ENCODE measurements at regions of chr1 and their contacts with region 1.

Region 1: DNA sequence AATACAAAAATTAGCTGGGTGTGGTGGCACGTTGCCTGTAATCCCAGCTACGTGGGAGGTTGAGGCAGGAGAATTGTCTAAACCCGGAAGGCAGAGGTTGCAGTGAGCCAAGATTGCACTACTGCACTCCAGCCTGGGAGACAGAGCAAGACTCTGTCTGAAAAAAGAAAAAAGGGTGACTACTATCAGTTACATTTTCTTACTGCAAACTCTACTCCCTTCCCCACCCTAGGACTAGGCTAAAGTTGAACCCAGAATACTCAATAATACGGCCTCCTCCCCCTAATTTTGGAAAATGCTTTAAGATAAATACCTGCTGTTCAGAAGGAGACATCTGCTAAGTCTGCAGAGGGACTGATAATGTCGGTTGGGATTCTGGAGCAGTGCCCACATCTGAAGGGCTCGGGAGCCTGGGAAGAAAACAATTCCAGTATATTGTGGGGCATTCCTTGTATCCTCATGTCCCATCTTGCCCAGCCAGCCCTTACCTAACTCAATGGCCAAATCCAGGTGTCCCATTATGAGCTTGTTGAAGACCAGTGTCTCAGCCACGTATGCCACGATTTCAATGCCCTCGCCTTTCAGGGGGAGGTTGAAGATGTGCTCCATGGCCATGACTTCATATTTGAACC is 89.7 kb downstream of the ADCY10 start:
- DNase-seq: no peak
- ATAC-seq: no peak
- H3K4me3 ChIP-seq: no peak overlapping the region
- H3K27ac ChIP-seq: no peak overlapping the region
- H3K4me1 ChIP-seq: no peaks in the 10 kb centered on the region
- H3K27me3 ChIP-seq: no peaks in the 10 kb centered on the region
- CTCF ChIP-seq: no peak
- EP300 ChIP-seq: no peak
- POLR2A ChIP-seq: no peak
- RAD21 ChIP-seq: no peak

Region 2: DNA sequence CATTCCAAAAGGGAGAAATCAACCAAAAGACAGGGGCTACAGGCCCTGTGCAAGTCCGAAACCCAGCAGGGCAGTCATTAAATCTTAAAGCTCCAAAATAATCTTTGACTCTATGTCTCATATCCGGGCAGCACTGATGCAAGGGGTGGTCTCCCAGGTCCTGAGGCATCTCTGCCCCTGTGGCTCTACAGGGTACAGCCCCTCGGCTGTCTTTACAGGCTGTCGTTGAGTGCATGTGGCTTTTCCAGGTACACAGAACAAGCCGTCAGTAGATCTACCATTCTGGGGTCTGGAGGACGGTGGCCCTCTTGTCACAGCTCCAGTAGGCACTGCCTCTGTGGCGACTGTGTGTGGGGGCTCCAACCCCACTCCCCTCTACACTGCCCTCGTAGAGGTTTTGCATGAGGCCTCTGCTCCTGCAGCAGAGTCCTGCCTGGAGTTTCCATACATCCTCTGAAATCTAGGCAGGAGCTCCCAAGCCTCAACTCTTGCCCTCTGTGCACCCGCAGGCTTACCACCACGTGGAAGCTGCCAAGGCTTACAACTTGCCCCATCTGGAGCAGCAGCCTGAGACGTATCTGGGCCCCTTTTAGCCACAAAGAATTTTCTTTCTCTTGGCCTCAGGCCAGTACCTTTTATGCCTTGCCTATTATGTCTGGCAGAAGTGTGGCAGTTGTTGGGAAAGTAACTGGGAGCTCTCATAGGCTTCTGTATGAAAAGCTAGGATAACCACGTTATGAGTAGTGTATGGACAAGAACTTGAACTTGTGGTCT is 551.1 kb before region 1 on chr1:
- CTCF ChIA-PET with region 1: no interaction called
- POLR2A ChIA-PET with region 1: no interaction called
- RAD21 ChIA-PET with region 1: no interaction called
- SMC1A ChIA-PET with region 1: no interaction called
- in situ Hi-C with region 1: no loop called
- intact Hi-C with region 1: no loop called
- DNase-seq: no peak
- ATAC-seq: no peak; the same call in 2 of the 3 replicates
- H3K4me3 ChIP-seq: no peak overlapping the region
- H3K27ac ChIP-seq: no peak overlapping the region
- H3K4me1 ChIP-seq: peaks cover 23% of the 10 kb centered on the region; the same call in 1 of the 2 replicates
- H3K27me3 ChIP-seq: no peaks in the 10 kb centered on the region
- CTCF ChIP-seq: no peak
- EP300 ChIP-seq: no peak
- POLR2A ChIP-seq: no peak
- RAD21 ChIP-seq: no peak

Region 3: GRCh38 chr1:167881069-167881468 is 56.8 kb after region 1 on chr1:
- CTCF ChIA-PET with region 1: no interaction called
- POLR2A ChIA-PET with region 1: no interaction called
- RAD21 ChIA-PET with region 1: no interaction called
- SMC1A ChIA-PET with region 1: interaction called, 3 read pairs
- in situ Hi-C with region 1: no loop called
- intact Hi-C with region 1: loop called (anchors 2 kb)
- DNase-seq: no peak
- ATAC-seq: no peak
- H3K4me3 ChIP-seq: no peak overlapping the region
- H3K27ac ChIP-seq: no peak overlapping the region
- H3K4me1 ChIP-seq: no peaks in the 10 kb centered on the region
- H3K27me3 ChIP-seq: no peaks in the 10 kb centered on the region
- CTCF ChIP-seq: no peak
- EP300 ChIP-seq: no peak
- POLR2A ChIP-seq: no peak
- RAD21 ChIP-seq: no peak

Measured in GM12878 (cell line).